ENCODE measurements at regions of chr2 and their contacts with region 1.

Region 1: GRCh38 chr2:224145751-224146355 is 106.8 kb upstream of the SERPINE2 start:
- DNase-seq: peak; percentile 79
- ATAC-seq: peak; percentile 58
- H3K4me3 ChIP-seq: no peak overlapping the region
- H3K27ac ChIP-seq: peak overlapping the region; percentile 75
- H3K4me1 ChIP-seq: peaks cover 53% of the 10 kb centered on the region
- H3K27me3 ChIP-seq: no peaks in the 10 kb centered on the region
- CTCF ChIP-seq: no peak

Region 2: DNA sequence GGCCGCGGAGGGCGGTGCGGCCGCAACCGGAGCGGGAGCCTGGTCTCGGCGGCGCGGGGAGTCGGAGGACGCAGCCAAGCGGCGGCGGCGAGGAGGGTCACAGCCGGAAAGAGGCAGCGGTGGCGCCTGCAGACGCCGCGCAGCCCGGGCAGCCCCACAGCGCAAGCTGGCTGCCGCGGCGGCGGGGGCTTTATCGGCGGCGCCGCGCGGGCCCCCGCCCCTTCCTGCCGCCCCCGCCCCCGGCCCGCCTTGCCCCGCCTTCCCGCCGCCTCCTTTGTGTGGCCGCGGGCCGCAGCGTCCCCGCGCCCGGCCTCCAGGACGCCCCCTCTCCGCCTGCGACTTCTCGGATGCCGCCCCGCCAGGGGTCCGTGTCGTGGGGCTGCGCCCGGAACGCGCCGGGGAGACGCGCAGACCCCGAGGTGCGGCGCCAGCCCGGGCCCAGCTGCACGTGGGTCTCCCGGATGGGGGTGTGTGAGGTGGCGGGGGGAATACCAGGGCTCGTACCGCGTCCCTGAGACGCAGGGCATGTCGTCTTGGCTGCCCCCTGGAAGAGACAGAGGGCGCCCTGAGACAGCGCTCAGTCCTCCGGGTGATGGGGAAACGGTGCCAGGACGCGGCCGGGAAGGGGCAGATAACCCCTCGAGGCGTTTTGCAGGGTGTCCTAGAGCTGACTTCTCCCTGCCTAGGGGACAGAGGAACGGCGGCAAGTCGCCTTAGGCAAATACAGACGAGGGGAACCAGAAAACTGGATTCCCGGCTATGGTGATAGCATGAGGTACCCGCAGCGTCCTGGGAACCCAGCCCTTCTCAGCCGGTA is 106.5 kb before region 1 on chr2 and contains the start of gene SERPINE2:
- CTCF ChIA-PET with region 1: interaction called, 3 read pairs
- POLR2A ChIA-PET with region 1: no interaction called
- intact Hi-C with region 1: loop called (anchors 2 kb)
- DNase-seq: peak; percentile 69
- ATAC-seq: peak; percentile 74
- H3K4me3 ChIP-seq: peak within 1 kb of the TSS; percentile 72
- H3K27ac ChIP-seq: no peak within 1 kb of the TSS
- H3K4me1 ChIP-seq: peaks cover 16% of the 10 kb centered on the region
- H3K27me3 ChIP-seq: no peaks in the 10 kb centered on the region
- CTCF ChIP-seq: peak; percentile 70
- total RNA-seq, gene SERPINE2: 17.1 and 18.8 TPM in 2 replicates

Region 3: DNA sequence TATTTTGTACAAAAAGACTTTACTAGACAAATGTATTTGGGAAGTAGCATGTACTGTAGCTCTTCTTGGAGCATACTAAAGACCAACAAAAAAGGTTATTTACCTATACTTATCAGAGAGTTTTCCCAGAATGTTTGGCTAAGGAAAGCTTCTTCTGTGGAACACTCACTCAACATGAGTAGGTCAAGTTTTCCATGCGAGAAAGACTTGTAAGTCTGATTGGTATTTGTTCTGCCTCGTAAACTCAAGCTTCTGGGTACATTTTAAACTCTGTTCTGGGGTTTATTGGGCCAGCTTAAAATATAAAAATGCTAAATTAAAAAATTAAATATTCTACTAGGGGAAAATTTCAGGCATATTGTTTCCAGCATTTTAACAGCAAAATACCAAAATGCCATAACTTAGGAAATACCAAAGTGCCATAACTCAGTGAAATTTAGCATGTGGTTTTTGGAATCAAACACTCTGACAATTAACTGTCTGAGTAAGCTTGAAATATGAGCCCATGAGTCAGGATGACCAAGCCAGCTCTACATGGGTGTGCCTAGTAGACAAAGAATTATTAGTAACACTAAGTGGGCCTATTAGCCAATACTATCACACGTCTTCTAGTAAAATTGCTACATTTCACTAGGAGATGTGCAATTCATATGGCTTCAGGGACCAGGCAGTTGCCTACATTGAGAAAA is 59.5 kb before region 1 on chr2:
- CTCF ChIA-PET with region 1: interaction called, 3 read pairs
- POLR2A ChIA-PET with region 1: no interaction called
- intact Hi-C with region 1: loop called (anchors 1 kb)
- DNase-seq: peak; percentile 96
- ATAC-seq: peak; percentile 88
- H3K4me3 ChIP-seq: peak overlapping the region; percentile 55
- H3K27ac ChIP-seq: peak overlapping the region; percentile 97
- H3K4me1 ChIP-seq: peaks cover 35% of the 10 kb centered on the region
- H3K27me3 ChIP-seq: no peaks in the 10 kb centered on the region
- CTCF ChIP-seq: no peak

Region 4: GRCh38 chr2:224163566-224164307 is 17.9 kb after region 1 on chr2:
- CTCF ChIA-PET with region 1: no interaction called
- POLR2A ChIA-PET with region 1: no interaction called
- intact Hi-C with region 1: loop called (anchors 2 kb)
- DNase-seq: peak; percentile 80
- ATAC-seq: peak; percentile 81
- H3K4me3 ChIP-seq: no peak overlapping the region
- H3K27ac ChIP-seq: peak overlapping the region; percentile 55
- H3K4me1 ChIP-seq: peaks cover 34% of the 10 kb centered on the region
- H3K27me3 ChIP-seq: no peaks in the 10 kb centered on the region
- CTCF ChIP-seq: no peak

Region 5: DNA sequence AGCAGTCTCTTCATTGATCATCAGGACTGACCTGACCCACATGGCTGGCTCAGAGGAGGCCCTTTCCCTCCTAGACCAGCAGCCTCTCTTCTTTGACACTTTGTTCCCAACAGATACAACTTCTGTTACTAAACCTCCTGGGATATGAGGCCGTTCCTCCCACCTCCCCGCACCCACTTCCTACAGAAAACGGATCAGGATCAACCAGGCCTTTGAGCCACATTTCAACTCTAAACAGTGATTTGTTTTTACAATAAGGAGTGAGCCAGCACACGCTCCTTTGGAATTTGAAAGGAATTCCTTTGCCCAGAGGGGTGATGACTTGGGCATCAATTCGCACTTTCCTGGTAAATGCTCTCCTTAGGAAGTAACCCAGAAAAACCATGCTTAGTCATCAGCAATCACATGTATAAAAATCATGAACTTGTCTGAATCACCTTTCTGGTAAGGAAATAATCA is 75.6 kb after region 1 on chr2:
- CTCF ChIA-PET with region 1: no interaction called
- POLR2A ChIA-PET with region 1: no interaction called
- intact Hi-C with region 1: loop called (anchors 2 kb)
- DNase-seq: peak; percentile 97
- ATAC-seq: peak; percentile 90
- H3K4me3 ChIP-seq: no peak overlapping the region
- H3K27ac ChIP-seq: peak overlapping the region; percentile 84
- H3K4me1 ChIP-seq: peaks cover 28% of the 10 kb centered on the region
- H3K27me3 ChIP-seq: no peaks in the 10 kb centered on the region
- CTCF ChIP-seq: no peak

Region 6: GRCh38 chr2:224268441-224268840 is 122.6 kb after region 1 on chr2:
- CTCF ChIA-PET with region 1: no interaction called
- POLR2A ChIA-PET with region 1: no interaction called
- intact Hi-C with region 1: loop called (anchors 2 kb)
- DNase-seq: peak; percentile 97
- ATAC-seq: peak; percentile 93
- H3K4me3 ChIP-seq: no peak overlapping the region
- H3K27ac ChIP-seq: peak overlapping the region; percentile 72
- H3K4me1 ChIP-seq: peaks cover 39% of the 10 kb centered on the region
- H3K27me3 ChIP-seq: no peaks in the 10 kb centered on the region
- CTCF ChIP-seq: no peak

Region 7: GRCh38 chr2:224284134-224284946 is 138.5 kb after region 1 on chr2:
- CTCF ChIA-PET with region 1: no interaction called
- POLR2A ChIA-PET with region 1: no interaction called
- intact Hi-C with region 1: loop called (anchors 5 kb)
- DNase-seq: peak; percentile 73
- ATAC-seq: peak; percentile 77
- H3K4me3 ChIP-seq: no peak overlapping the region
- H3K27ac ChIP-seq: no peak overlapping the region
- H3K4me1 ChIP-seq: no peaks in the 10 kb centered on the region
- H3K27me3 ChIP-seq: no peaks in the 10 kb centered on the region
- CTCF ChIP-seq: peak; percentile 93; the same call in 1 of the 2 replicates

Measured in PC-3 (cell line).